Heart right ventricle (tissue), 16 donors: ENCODE measurements at regions of chr2 and their contacts with region 1.

Region 1: DNA sequence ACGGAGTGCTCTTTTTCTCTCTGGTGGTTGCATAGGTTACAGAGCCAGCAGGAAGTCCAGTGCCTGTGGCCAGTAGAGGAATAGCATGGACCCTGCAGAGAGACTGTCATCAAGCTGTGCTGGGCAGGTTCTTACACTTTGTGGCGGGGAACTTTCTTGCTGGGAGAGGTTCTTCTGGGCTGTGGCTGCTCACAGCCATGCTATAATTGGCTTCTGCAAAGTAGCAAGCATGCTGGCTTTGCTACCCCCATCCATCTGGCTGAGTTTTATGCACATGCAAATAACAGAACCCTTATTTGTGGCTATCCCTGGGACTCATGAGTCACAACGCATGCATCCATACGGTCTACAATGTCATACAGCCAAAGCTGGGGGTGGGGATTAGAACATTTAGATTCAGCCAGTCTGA is 68.9 kb downstream of the PLCL1 start:
- DNase-seq: no peak
- ATAC-seq: peak in 7 of 8 donors; percentile 33 to 77 (median 58)
- H3K4me3 ChIP-seq: no peak overlapping the region
- H3K27ac ChIP-seq: peak overlapping the region in 5 of 10 donors; percentile 2 to 23 (median 16)
- H3K4me1 ChIP-seq: peaks cover 0 to 86% (median 59%) of the 10 kb centered on the region in 9 donors
- H3K27me3 ChIP-seq: no peaks in the 10 kb centered on the region
- CTCF ChIP-seq: no peak

Region 2: DNA sequence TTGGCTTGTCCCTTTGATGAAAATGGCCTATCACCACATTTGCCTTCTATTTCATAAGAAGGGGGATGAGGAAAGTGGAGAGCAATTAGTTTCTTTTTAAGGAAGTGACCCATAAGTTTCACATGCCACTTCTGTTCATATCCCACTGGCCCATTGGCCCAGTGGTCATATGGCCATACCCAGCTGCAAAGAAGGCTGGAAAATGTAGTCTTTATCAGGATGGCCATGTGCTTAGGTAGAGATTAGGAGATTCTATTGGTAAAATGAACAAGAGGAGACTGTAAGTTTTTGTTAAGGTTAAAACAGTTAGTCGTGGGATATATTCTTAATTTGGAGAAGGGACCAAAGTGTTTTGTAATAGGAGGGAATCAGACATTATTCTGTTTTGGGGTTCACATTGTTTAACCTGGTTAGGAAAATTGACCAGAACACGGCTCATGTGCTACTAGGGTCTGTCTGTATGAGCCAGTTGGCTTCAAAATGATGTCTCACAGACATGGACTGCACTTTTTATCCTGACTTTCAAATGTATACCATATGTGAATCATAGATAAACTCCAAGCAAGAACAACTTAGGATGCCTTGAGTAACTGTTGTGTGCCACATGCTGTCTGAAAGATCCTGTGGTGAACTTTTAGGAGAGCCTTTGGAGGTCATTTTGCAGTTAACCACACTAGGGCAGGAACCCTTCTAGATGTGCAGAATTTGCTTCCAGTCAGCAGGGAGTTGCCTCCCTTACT is 51.6 kb before region 1 on chr2:
- intact Hi-C with region 1: no loop called
- DNase-seq: no peak
- ATAC-seq: no peak
- H3K4me3 ChIP-seq: no peak overlapping the region
- H3K27ac ChIP-seq: no peak overlapping the region
- H3K4me1 ChIP-seq: peaks cover 0 to 31% (median 6%) of the 10 kb centered on the region in 9 donors
- H3K27me3 ChIP-seq: no peaks in the 10 kb centered on the region
- CTCF ChIP-seq: no peak

Region 3: DNA sequence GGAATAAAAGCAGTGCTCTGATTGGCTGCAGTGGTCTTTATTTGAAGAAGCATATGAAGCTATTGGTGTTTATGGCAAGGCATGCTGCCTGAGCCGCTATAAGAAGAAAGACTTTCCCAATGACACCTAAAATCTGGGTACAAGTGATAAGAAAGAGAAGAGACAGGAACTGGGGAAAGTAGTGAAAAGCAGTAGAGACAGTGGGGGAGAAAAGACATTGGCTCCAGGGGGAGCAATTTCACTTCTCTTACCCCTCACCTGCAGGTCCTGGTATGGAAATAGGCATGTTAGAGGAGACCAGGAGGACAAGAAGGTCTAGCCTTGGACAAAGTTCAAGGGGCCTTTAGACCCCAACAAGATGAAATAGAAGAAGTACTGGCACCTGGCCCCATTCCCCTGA is 21.8 kb before region 1 on chr2:
- intact Hi-C with region 1: loop called in 1 of 10 experiments (anchors 2 kb)
- DNase-seq: no peak
- ATAC-seq: peak in 1 of 8 donors; percentile 32
- H3K4me3 ChIP-seq: no peak overlapping the region
- H3K27ac ChIP-seq: peak overlapping the region in 2 of 10 donors; percentile 19 to 36
- H3K4me1 ChIP-seq: peaks cover 0 to 94% (median 56%) of the 10 kb centered on the region in 9 donors
- H3K27me3 ChIP-seq: no peaks in the 10 kb centered on the region
- CTCF ChIP-seq: peak in 3 of 9 donors; percentile 14 to 20 (median 17)

Region 4: DNA sequence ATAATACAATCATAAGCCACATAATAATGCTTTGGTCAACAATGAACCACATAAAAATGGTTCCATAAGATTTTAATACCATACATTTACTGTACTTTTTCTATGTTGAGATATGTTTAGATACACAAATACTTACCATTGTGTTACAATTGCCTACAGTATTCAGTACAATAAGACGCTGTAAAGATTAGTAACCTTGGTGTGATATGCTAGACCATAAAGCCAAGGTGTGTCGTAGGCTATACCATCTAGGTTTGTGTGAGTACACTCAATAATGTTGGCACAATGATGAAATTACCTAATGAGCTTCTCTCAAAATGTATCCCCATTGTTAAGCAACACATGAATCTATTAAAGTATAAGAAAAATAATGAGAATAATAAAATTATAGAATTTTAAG is 922.1 kb after region 1 on chr2:
- intact Hi-C with region 1: no loop called
- DNase-seq: no peak
- ATAC-seq: no peak
- H3K4me3 ChIP-seq: no peak overlapping the region
- H3K27ac ChIP-seq: no peak overlapping the region
- H3K4me1 ChIP-seq: no peaks in the 10 kb centered on the region
- H3K27me3 ChIP-seq: no peaks in the 10 kb centered on the region
- CTCF ChIP-seq: no peak